Activated naive CD4-positive, alpha-beta T cell treated with anti-CD3 and anti-CD28 coated beads for 36 hours (primary cell): ENCODE measurements at regions of chr18 and their contacts with region 1.

Region 1: GRCh38 chr18:23573626-23574431 is 12.5 kb downstream of the NPC1 start:
- DNase-seq: peak; percentile 64
- H3K4me3 Mint-ChIP-seq: no peak overlapping the region
- H3K27ac Mint-ChIP-seq: peak overlapping the region; percentile 83
- H3K4me1 Mint-ChIP-seq: peaks cover 32% of the 10 kb centered on the region
- H3K27me3 Mint-ChIP-seq: no peaks in the 10 kb centered on the region

Region 2: GRCh38 chr18:23452728-23453679 is 120.8 kb before region 1 on chr18 and contains the start of gene RIOK3:
- CTCF ChIA-PET with region 1: no interaction called
- intact Hi-C with region 1: no loop called
- DNase-seq: peak; percentile 94
- H3K4me3 Mint-ChIP-seq: peak within 1 kb of the TSS; percentile 99
- H3K27ac Mint-ChIP-seq: peak within 1 kb of the TSS; percentile 91
- H3K4me1 Mint-ChIP-seq: peaks cover 42% of the 10 kb centered on the region
- H3K27me3 Mint-ChIP-seq: no peaks in the 10 kb centered on the region
- total RNA-seq, gene RIOK3: 53.8 to 59.5 TPM

Region 3: DNA sequence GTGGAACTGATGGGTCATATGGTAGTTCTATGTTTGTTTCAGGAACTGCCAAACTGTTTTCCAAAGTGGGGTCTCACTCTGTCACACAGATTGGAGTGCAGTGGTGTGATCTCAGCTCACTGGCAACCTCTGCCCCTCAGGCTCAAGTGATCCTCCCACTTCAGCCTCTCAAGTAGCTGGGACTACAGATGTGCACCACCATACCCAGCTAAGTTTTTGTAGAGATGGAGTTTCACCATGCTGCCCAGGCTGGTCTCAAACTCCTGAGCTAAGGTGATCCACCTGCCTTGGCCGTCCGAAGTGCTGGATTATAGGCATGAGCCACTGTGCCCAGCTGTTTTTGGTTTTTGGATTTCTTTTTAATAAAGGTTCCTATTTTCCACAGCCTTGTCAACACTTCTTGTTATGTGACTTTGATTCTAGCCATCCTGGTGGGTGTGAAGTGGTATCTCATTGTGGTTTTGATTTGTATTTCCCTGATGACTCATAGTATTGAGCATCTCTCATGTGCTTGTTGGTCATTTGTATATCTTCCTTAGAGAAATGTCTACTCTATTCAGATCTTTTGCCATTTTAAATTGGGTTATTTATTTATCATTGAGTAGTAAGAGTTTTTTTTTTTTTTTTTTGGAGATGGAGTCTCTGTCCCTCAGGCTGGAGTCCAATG is 10.3 kb before region 1 on chr18:
- CTCF ChIA-PET with region 1: no interaction called
- intact Hi-C with region 1: loop called (anchors 1 kb)
- DNase-seq: no peak
- H3K4me3 Mint-ChIP-seq: no peak overlapping the region
- H3K27ac Mint-ChIP-seq: no peak overlapping the region
- H3K4me1 Mint-ChIP-seq: peaks cover 7% of the 10 kb centered on the region
- H3K27me3 Mint-ChIP-seq: no peaks in the 10 kb centered on the region